Natural killer cell (primary cell): ENCODE measurements at regions of chr13 and their contacts with region 1.

Region 1: DNA sequence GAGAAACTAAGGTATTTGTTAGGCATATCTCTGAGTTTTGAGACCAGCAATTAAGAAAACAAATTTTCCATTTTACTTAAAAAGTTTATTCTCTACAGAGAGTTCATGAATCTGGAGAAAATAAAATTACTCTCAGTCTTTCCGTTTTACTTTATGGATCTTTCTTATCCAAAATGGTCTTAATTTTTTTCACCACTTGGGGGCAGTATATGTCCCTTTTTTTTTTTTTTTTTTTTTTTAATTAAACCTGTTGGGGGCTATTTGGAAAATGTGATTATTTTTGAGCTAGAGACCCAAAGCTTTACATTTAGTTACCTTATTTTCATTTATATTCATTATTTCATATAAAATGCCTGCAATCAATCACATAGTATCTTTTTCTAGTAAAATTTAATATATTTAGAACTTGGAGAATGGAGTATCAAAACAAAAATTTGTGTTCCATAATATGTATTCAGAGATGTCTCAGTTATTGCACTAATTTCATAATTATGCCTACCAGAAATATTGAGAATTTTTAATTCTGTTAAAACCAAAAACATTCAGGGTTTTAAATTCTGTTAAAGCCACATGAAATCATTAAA is 27.1 kb downstream of the PIBF1 start:
- DNase-seq: peak in 1 of 2 donors; percentile 62
- ATAC-seq: peak in 1 of 3 donors; percentile 37
- H3K4me3 ChIP-seq: no peak overlapping the region
- H3K4me3 Mint-ChIP-seq: no peak overlapping the region
- H3K27ac ChIP-seq: no peak overlapping the region
- H3K27ac Mint-ChIP-seq: no peak overlapping the region
- H3K4me1 ChIP-seq: no peaks in the 10 kb centered on the region
- H3K4me1 Mint-ChIP-seq: no peaks in the 10 kb centered on the region
- H3K27me3 ChIP-seq: no peaks in the 10 kb centered on the region
- H3K27me3 Mint-ChIP-seq: no peaks in the 10 kb centered on the region
- CTCF ChIP-seq: peak; percentile 84

Region 2: DNA sequence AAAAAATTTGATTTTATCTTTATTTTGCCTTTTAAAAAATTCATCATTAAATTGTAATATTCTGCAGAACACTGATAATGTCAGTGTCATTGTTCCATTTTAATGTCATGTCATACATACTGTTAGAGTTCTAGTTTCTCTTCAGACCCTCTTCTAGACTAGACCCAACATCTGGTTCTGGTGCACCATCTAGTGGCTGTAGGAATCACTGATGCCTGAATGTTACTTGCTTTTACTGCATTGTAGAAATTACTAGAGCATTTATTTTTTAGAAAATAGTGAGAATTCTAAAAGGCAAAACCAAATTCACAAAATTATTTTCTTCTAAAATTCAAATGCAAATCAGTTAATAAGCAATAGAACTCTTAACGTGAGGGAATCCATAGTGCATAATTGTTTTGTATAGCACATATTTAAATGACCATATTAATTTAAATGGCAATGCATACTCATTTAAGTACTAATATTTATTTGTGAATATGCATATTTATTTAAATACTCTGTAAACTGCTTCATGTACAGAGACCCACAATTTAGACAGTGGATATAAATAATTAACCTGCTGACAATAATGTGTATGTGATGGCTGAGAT is 899.5 kb after region 1 on chr13:
- intact Hi-C with region 1: loop called (anchors 2 kb)
- DNase-seq: peak in 1 of 2 donors; percentile 86
- ATAC-seq: peak; percentile 86 to 89 (median 87)
- H3K4me3 ChIP-seq: no peak overlapping the region
- H3K4me3 Mint-ChIP-seq: no peak overlapping the region
- H3K27ac ChIP-seq: no peak overlapping the region
- H3K27ac Mint-ChIP-seq: peak overlapping the region in 1 of 2 donors; percentile 26
- H3K4me1 ChIP-seq: no peaks in the 10 kb centered on the region
- H3K4me1 Mint-ChIP-seq: peaks cover 2 to 27% of the 10 kb centered on the region in 2 donors
- H3K27me3 ChIP-seq: no peaks in the 10 kb centered on the region
- H3K27me3 Mint-ChIP-seq: no peaks in the 10 kb centered on the region
- CTCF ChIP-seq: peak; percentile 75